Mammary epithelial cell (primary cell): ENCODE measurements at regions of chr16 and their contacts with region 1.

Region 1: GRCh38 chr16:66608241-66609138 is 4.0 kb downstream of the CMTM3 start:
- DNase-seq: peak; percentile 80
- H3K4me3 ChIP-seq: no peak overlapping the region
- H3K27ac ChIP-seq: no peak overlapping the region
- H3K4me1 ChIP-seq: peaks cover 29% of the 10 kb centered on the region
- H3K27me3 ChIP-seq: no peaks in the 10 kb centered on the region
- CTCF ChIP-seq: peak; percentile 85 to 98

Region 2: DNA sequence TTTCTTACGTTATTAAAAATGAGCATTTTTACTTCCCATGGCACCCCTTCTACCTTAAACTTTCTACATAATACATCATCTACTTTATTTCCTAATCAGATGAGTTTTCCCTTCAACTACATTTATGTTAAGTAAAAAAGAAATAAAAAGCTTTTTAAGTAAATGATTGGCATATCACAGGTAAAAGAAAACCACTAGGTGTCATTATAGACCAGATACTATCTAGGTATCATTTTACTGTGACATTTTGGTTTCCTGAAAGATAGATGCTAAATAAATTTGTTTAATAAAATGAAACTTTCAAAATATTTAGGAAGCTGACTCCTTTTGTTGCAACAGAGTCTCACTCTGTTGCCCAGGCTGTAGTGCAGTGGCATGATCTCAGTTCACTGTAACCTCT is 46.1 kb before region 1 on chr16:
- CTCF ChIA-PET with region 1: interaction called, 3 read pairs
- dilution Hi-C with region 1: no loop called
- in situ Hi-C with region 1: no loop called
- intact Hi-C with region 1: loop called (anchors 1 kb)
- DNase-seq: no peak
- H3K4me3 ChIP-seq: no peak overlapping the region
- H3K27ac ChIP-seq: no peak overlapping the region
- H3K4me1 ChIP-seq: no peaks in the 10 kb centered on the region
- H3K27me3 ChIP-seq: no peaks in the 10 kb centered on the region
- CTCF ChIP-seq: peak in 1 of 2 donors; percentile 38

Region 3: GRCh38 chr16:66660422-66661209 is 52.1 kb after region 1 on chr16:
- CTCF ChIA-PET with region 1: interaction called, 7 read pairs
- dilution Hi-C with region 1: no loop called
- in situ Hi-C with region 1: no loop called
- intact Hi-C with region 1: loop called (anchors 1 kb)
- DNase-seq: peak; percentile 85
- H3K4me3 ChIP-seq: no peak overlapping the region
- H3K27ac ChIP-seq: peak overlapping the region; percentile 74
- H3K4me1 ChIP-seq: peaks cover 42% of the 10 kb centered on the region
- H3K27me3 ChIP-seq: no peaks in the 10 kb centered on the region
- CTCF ChIP-seq: peak in 1 of 2 donors; percentile 39

Region 4: DNA sequence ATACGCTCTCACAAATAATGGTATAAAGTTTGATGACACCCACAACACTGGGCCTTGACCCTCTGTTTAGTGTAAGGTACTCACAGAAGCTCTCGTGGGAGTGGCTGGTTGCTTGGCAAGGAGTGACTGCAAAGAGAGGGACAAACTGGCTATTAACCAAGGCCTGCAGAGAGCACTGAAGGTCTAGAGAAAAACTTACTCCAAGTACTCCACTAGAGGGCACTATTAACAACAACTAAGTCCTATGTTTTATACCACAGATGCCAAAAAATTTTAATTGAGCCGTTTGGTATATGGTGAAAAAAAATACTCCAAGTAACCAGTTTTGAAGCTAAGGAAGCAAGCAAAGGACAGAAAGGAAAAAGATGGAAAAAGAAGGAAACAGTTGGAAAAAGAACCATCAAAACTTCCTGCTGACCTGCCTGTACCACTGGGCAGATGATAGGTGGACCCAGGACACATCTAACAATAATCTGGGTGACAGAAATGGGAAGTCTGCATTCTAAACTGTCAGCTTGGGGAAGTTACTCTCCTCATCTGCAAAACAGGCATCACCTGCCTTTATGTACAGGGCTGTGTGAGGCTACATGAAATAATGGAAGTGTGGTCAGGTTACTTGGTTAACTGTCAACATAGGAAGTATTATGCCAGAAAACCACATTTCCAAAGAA is 119.8 kb after region 1 on chr16:
- CTCF ChIA-PET with region 1: no interaction called
- dilution Hi-C with region 1: no loop called
- in situ Hi-C with region 1: no loop called
- intact Hi-C with region 1: loop called (anchors 1 kb)
- DNase-seq: peak; percentile 26
- H3K4me3 ChIP-seq: no peak overlapping the region
- H3K27ac ChIP-seq: no peak overlapping the region
- H3K4me1 ChIP-seq: no peaks in the 10 kb centered on the region
- H3K27me3 ChIP-seq: no peaks in the 10 kb centered on the region
- CTCF ChIP-seq: peak; percentile 47 to 58

Region 5: GRCh38 chr16:66751303-66751991 is 143.0 kb after region 1 on chr16 and contains the start of gene DYNC1LI2:
- CTCF ChIA-PET with region 1: no interaction called
- dilution Hi-C with region 1: no loop called
- in situ Hi-C with region 1: no loop called
- intact Hi-C with region 1: loop called (anchors 1 kb)
- DNase-seq: peak; percentile 58
- H3K4me3 ChIP-seq: peak within 1 kb of the TSS; percentile 68 to 97 (median 81)
- H3K27ac ChIP-seq: peak within 1 kb of the TSS; percentile 80
- H3K4me1 ChIP-seq: peaks cover 10% of the 10 kb centered on the region
- H3K27me3 ChIP-seq: no peaks in the 10 kb centered on the region
- CTCF ChIP-seq: peak; percentile 57 to 62
- total RNA-seq, gene DYNC1LI2: 90.8 to 127 TPM

Region 6: DNA sequence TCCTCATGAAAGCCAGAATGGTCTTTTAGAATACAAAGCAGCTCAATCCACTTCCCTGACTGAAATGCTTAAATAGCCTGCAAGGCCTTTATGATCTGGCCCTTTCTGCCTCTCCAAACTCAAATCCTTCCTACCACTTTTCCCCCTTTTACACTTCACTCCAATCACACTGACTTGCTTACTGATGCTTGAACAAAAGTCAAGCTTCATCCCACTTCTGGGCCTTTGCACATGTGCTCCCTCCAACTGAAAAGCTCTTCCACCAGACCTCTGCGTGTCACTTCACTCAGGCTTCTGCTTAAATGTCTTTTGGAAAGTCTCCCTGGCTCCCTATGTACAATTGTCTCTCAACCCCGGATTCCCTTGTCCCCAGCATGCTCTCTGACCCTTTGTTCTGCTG is 206.2 kb after region 1 on chr16:
- CTCF ChIA-PET with region 1: no interaction called
- dilution Hi-C with region 1: no loop called
- in situ Hi-C with region 1: no loop called
- intact Hi-C with region 1: no loop called
- DNase-seq: no peak
- H3K4me3 ChIP-seq: no peak overlapping the region
- H3K27ac ChIP-seq: no peak overlapping the region
- H3K4me1 ChIP-seq: peaks cover 10% of the 10 kb centered on the region
- H3K27me3 ChIP-seq: no peaks in the 10 kb centered on the region
- CTCF ChIP-seq: no peak